Gastrocnemius medialis (tissue), 4 donors: ENCODE measurements at regions of chr7 and their contacts with region 1.

Region 1: DNA sequence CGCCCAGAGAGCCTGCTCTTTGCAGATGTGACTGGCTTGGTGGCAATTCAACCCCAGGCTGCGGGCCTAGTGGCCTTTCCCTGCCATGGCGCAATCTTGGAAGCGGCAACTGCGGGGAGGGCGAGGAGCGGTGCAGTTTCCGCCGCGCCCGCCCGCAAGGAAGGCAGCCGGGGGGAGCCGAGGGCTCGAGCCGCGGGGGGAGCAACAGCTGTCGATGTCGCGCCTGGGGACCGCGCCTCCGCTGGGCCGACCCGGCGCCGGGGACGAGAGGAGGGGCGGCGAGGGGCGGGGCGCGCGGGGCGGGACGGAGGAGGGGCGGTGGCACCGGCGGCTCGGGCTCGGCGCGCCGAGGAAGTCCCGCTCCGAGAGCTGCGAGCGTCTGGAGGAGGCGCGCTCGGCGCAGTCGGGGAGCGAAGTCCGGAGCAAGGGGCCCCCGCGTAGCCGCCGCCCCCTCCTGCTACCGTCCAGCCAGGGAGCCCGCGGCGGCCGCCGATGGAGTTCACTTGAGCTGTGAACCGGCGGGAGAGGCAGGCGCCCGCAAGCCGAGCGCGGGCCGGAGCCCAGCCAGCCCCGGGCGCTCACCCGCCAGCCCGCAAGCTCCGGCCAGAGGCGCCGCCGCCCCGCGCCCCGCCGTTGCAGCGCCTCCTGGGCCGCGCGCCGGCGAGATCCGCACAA is 438.1 kb upstream of the GALNT17 start:
- DNase-seq: peak; percentile 62 to 87
- ATAC-seq: peak; percentile 74 to 75
- H3K4me3 ChIP-seq: peak overlapping the region; percentile 59 to 95 (median 72)
- H3K27ac ChIP-seq: peak overlapping the region; percentile 80 to 93 (median 86)
- H3K4me1 ChIP-seq: peaks cover 3 to 36% of the 10 kb centered on the region in 2 donors
- H3K27me3 ChIP-seq: no peaks in the 10 kb centered on the region
- CTCF ChIP-seq: peak in 2 of 5 experiments; percentile 31 to 41
- POLR2A ChIP-seq: peak; percentile 92 to 96

Region 2: GRCh38 chr7:70040970-70041766 is 652.7 kb before region 1 on chr7:
- in situ Hi-C with region 1: no loop called
- intact Hi-C with region 1: loop called (anchors 5 kb)
- DNase-seq: no peak
- ATAC-seq: no peak
- H3K4me3 ChIP-seq: no peak overlapping the region
- H3K27ac ChIP-seq: no peak overlapping the region
- H3K4me1 ChIP-seq: peaks cover 0 to 8% of the 10 kb centered on the region in 2 donors
- H3K27me3 ChIP-seq: no peaks in the 10 kb centered on the region
- CTCF ChIP-seq: peak in 1 of 5 experiments; percentile 30
- POLR2A ChIP-seq: no peak

Region 3: DNA sequence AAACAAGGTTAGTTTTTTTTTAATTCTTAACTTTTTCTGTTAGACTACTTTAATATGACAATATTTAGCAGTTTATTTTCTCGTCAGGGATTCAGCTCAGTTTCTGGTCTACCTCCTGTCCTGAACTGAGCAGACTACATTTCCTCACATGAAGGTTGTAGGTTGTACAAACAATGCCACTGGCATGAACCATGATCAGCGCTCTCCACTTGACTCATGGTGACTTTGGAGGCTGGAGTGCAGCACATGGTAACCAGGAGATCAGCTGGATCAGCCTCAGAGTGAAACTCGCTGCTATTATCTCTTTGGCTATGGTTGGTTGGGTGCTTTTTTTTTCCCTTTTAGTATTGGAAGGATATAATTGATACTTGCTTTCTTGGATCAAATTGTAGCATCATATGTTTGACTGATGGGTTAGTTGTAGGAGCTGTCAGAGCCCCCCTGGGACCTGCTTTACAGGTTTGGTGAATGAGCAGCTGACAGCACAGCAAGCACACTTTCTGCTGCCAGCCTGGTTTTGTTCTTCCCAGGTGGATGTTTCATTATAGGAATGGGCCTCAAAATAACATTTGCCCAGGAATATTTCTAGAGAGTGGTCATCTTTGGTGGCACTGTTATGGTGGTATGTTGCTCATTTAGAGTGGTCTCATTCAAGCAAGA is 539.2 kb before region 1 on chr7:
- in situ Hi-C with region 1: no loop called
- intact Hi-C with region 1: loop called (anchors 10 kb)
- DNase-seq: no peak
- ATAC-seq: peak in 1 of 2 donors; percentile 49
- H3K4me3 ChIP-seq: no peak overlapping the region
- H3K27ac ChIP-seq: no peak overlapping the region
- H3K4me1 ChIP-seq: peaks cover 6 to 32% of the 10 kb centered on the region in 2 donors
- H3K27me3 ChIP-seq: no peaks in the 10 kb centered on the region
- CTCF ChIP-seq: no peak
- POLR2A ChIP-seq: no peak

Region 4: DNA sequence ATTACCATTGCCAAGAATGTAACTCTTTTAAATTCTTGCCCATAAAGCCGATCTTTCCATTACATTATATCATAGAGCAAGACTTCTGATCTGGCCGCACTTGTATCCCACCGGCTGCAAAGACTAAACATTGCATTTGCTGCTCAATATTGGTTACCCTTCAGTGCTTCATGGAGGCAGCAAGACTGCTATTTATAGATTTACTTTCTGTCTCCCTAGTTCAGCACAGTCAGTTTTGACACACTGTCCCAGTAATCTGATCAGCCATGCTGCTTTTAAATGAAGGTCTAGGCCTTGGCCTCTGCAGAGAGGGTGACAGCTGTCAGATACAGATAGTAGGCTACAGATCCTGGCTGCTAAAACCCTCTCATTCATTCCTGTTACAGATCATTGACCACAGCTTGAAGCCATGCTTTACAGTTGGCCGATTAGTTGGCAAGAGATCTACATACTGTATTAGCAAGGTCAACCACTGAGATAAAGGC is 124.4 kb before region 1 on chr7:
- in situ Hi-C with region 1: no loop called
- intact Hi-C with region 1: loop called (anchors 2 kb)
- DNase-seq: peak; percentile 53 to 77
- ATAC-seq: peak; percentile 94 to 95
- H3K4me3 ChIP-seq: peak overlapping the region in 1 of 4 donors; percentile 23
- H3K27ac ChIP-seq: peak overlapping the region; percentile 82 to 88 (median 85)
- H3K4me1 ChIP-seq: peaks cover 20 to 24% of the 10 kb centered on the region in 2 donors
- H3K27me3 ChIP-seq: no peaks in the 10 kb centered on the region
- CTCF ChIP-seq: no peak
- POLR2A ChIP-seq: no peak

Region 5: DNA sequence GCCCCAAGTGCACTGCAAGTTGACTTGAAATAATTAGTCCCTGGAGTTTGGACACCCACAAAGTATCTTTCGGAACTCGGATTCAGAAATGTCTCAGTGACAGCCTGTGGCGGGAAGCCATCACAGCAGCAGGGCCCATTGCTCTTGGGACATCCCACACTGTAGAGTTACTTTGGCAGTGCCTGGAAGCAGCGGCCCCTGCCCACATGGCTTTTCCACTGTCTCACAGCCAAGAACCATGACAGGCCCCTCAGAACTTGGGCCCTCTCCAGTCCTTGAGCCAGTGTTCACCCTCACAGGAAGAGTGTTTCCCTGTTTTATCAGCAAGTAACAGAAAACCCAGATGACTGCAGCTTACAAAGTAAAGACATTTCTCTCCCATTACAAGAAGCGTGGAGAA is 38.8 kb before region 1 on chr7:
- in situ Hi-C with region 1: no loop called
- intact Hi-C with region 1: loop called (anchors 1 kb)
- DNase-seq: peak in 1 of 2 donors; percentile 35
- ATAC-seq: no peak
- H3K4me3 ChIP-seq: no peak overlapping the region
- H3K27ac ChIP-seq: no peak overlapping the region
- H3K4me1 ChIP-seq: peaks cover 32 to 33% of the 10 kb centered on the region in 2 donors
- H3K27me3 ChIP-seq: no peaks in the 10 kb centered on the region
- CTCF ChIP-seq: no peak
- POLR2A ChIP-seq: no peak